H1 (cell line): ENCODE measurements at regions of chr15 and their contacts with region 1.

Region 1: GRCh38 chr15:68924866-68925560 is 5.3 kb upstream of the SPESP1 start:
- DNase-seq: peak; percentile 58 to 83
- H3K4me3 ChIP-seq: no peak overlapping the region
- H3K27ac ChIP-seq: no peak overlapping the region
- H3K4me1 ChIP-seq: no peaks in the 10 kb centered on the region
- H3K27me3 ChIP-seq: no peaks in the 10 kb centered on the region
- CTCF ChIP-seq: peak; percentile 84 to 93 (median 92)
- EP300 ChIP-seq: no peak
- POLR2A ChIP-seq: no peak
- RAD21 ChIP-seq: peak; percentile 98 to 100

Region 2: GRCh38 chr15:68550481-68551295 is 374.3 kb before region 1 on chr15:
- CTCF ChIA-PET with region 1: interaction called, 53 read pairs
- POLR2A ChIA-PET with region 1: no interaction called
- DNase-seq: peak; percentile 44 to 97
- H3K4me3 ChIP-seq: no peak overlapping the region
- H3K27ac ChIP-seq: no peak overlapping the region
- H3K4me1 ChIP-seq: no peaks in the 10 kb centered on the region
- H3K27me3 ChIP-seq: no peaks in the 10 kb centered on the region; a peak in 1 of 7 replicates
- CTCF ChIP-seq: peak; percentile 73 to 96 (median 87)
- EP300 ChIP-seq: no peak
- POLR2A ChIP-seq: no peak
- RAD21 ChIP-seq: peak; percentile 92 to 97

Region 3: GRCh38 chr15:68783226-68784058 is 141.6 kb before region 1 on chr15:
- CTCF ChIA-PET with region 1: interaction called, 11 read pairs
- POLR2A ChIA-PET with region 1: no interaction called
- DNase-seq: peak in 1 of 2 experiments; percentile 82
- H3K4me3 ChIP-seq: no peak overlapping the region
- H3K27ac ChIP-seq: no peak overlapping the region
- H3K4me1 ChIP-seq: peaks cover 0 to 12% (median 4%) of the 10 kb centered on the region in 4 experiments; a peak in 5 of 7 replicates
- H3K27me3 ChIP-seq: no peaks in the 10 kb centered on the region
- CTCF ChIP-seq: peak; percentile 77 to 79 (median 79)
- EP300 ChIP-seq: no peak
- POLR2A ChIP-seq: no peak
- RAD21 ChIP-seq: peak; percentile 84 to 86

Region 4: GRCh38 chr15:68798346-68799094 is 126.5 kb before region 1 on chr15:
- CTCF ChIA-PET with region 1: no interaction called
- POLR2A ChIA-PET with region 1: no interaction called
- DNase-seq: no peak
- H3K4me3 ChIP-seq: no peak overlapping the region
- H3K27ac ChIP-seq: no peak overlapping the region
- H3K4me1 ChIP-seq: peaks cover 14 to 25% (median 19%) of the 10 kb centered on the region in 4 experiments
- H3K27me3 ChIP-seq: no peaks in the 10 kb centered on the region; a peak in 1 of 7 replicates
- CTCF ChIP-seq: no peak
- EP300 ChIP-seq: no peak
- POLR2A ChIP-seq: no peak
- RAD21 ChIP-seq: no peak

Region 5: DNA sequence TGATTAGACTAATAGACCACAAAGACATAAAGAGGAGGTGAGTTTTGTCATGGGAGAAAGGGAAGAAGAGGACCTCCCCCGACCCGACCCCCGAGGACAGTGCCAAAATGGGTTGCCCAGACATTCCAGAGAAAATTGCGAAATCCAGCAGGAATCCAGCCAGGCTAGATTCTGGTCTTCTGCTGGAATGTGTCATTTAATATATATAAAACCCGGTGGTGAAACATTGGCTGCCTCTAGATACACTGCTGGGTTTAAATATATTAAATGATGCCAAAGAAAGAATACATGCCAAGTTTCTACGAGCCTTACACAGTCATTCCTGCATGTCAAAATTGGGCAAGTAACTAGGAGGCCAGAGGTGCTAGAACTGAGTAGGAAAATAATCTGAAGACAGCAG is 39.9 kb before region 1 on chr15:
- CTCF ChIA-PET with region 1: interaction called, 10 read pairs
- POLR2A ChIA-PET with region 1: no interaction called
- DNase-seq: no peak
- H3K4me3 ChIP-seq: no peak overlapping the region
- H3K27ac ChIP-seq: no peak overlapping the region
- H3K4me1 ChIP-seq: no peaks in the 10 kb centered on the region; a peak in 1 of 7 replicates
- H3K27me3 ChIP-seq: no peaks in the 10 kb centered on the region
- CTCF ChIP-seq: no peak
- EP300 ChIP-seq: no peak
- POLR2A ChIP-seq: no peak
- RAD21 ChIP-seq: no peak

Region 6: DNA sequence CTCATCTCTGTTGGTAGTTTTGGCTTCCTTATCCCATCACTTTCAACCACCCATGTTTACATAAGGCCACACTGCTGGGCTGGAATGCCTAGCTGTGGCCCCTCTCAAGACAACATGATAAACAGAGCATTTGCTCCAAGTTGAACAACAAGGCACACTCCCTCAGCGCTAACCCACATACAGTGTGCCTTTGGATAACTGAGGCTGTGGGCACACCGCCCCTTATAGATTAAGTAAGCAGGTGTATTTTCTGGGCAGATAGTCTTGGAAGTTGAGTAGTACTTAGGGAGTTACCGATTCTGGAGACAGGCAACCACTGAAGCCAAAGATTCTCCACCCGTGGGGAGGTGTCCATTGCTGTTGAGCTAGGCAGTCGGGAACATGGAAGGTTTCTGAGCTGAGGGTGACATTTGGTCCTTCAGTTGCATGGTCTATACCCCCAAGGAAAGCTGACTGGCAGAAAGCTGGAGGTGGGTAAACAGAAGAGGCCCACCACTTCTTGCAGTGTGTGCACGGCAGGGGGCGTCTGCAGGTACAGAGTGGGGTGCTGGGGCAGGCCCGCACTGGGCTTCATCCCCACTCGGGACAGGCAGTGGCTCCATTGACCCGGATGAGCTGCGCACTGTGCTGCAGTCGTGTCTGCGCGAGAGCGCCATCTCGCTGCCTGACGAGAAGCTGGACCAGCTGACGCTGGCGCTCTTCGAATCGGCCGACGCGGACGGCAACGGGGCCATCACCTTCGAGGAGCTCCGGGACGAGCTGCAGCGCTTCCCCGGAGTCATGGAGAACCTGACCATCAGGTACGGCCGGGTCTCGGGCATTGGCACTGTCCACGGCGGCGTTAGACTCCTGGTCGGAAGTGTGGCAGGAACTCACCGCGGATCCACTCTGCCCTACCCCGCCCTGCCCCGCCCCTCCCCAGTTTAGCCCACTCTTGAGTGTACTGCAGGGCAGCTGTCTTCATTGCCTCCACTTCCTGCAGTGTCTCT is 106.3 kb after region 1 on chr15:
- CTCF ChIA-PET with region 1: interaction called, 18 read pairs
- POLR2A ChIA-PET with region 1: no interaction called
- DNase-seq: peak; percentile 53 to 81
- H3K4me3 ChIP-seq: peak overlapping the region in 2 of 4 experiments; percentile 23 to 50; a peak in 5 of 8 replicates
- H3K27ac ChIP-seq: no peak overlapping the region
- H3K4me1 ChIP-seq: peaks cover 0 to 4% (median 1%) of the 10 kb centered on the region in 4 experiments; a peak in 3 of 7 replicates
- H3K27me3 ChIP-seq: peaks cover 0 to 8% (median 0%) of the 10 kb centered on the region in 4 experiments; a peak in 3 of 7 replicates
- CTCF ChIP-seq: peak; percentile 84 to 92 (median 91)
- EP300 ChIP-seq: peak in 1 of 2 experiments; percentile 34; a peak in 1 of 3 replicates
- POLR2A ChIP-seq: no peak
- RAD21 ChIP-seq: peak; percentile 70 to 80